Left cardiac atrium (tissue), 4 donors: ENCODE measurements at regions of chr1 and their contacts with region 1.

Region 1: GRCh38 chr1:219587805-219588561 is 24.9 kb downstream of the ZC3H11B start:
- DNase-seq: no peak
- ATAC-seq: peak in 1 of 2 donors; percentile 59

Region 2: GRCh38 chr1:219514731-219515130 is 73.3 kb before region 1 on chr1:
- intact Hi-C with region 1: loop called in 1 of 2 experiments (anchors 2 kb)
- DNase-seq: no peak
- ATAC-seq: peak in 1 of 2 donors; percentile 57